CD4-positive, alpha-beta memory T cell (primary cell): ENCODE measurements at regions of chr5 and their contacts with region 1.

Region 1: GRCh38 chr5:172833686-172834414 is at the start of gene ERGIC1:
- DNase-seq: peak; percentile 59 to 73 (median 63)
- H3K4me3 ChIP-seq: peak within 1 kb of the TSS; percentile 63 to 69
- H3K4me3 Mint-ChIP-seq: peak within 1 kb of the TSS; percentile 90 to 96 (median 92)
- H3K27ac ChIP-seq: peak within 1 kb of the TSS; percentile 82
- H3K27ac Mint-ChIP-seq: peak within 1 kb of the TSS; percentile 89 to 97 (median 93)
- H3K4me1 ChIP-seq: peaks cover 47% of the 10 kb centered on the region
- H3K4me1 Mint-ChIP-seq: peaks cover 25 to 52% (median 36%) of the 10 kb centered on the region in 4 donors
- H3K27me3 ChIP-seq: no peaks in the 10 kb centered on the region
- H3K27me3 Mint-ChIP-seq: no peaks in the 10 kb centered on the region
- total RNA-seq, gene ERGIC1: 45.8 to 51.0 TPM

Region 2: DNA sequence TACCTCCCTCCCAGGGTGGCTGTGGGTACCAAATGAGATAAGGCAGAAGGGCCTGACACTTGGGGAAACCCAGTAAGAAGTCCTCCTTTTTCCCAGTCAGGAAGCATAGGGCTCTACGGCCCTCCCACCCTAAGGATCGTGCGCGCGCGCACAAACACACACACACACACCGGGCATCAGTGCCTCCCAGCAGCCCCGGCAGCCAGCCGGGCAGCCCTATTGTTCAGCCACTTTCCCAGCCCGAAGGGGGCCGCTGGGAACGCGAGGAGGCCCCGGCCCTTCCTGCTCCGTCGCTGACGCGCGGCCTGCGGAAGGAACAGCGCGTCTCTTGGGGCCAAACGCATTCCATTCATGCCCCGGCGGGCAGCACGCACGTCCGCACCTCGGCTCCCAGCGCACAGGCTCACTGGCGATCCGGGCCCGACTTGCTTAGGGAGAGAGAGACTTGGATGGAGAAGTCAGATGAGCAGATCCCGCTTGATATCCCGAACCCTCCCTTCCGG is 85.5 kb before region 1 on chr5:
- CTCF ChIA-PET with region 1: no interaction called
- POLR2A ChIA-PET with region 1: no interaction called
- intact Hi-C with region 1: no loop called
- DNase-seq: no peak
- H3K4me3 ChIP-seq: no peak overlapping the region
- H3K4me3 Mint-ChIP-seq: no peak overlapping the region
- H3K27ac ChIP-seq: no peak overlapping the region
- H3K27ac Mint-ChIP-seq: no peak overlapping the region
- H3K4me1 ChIP-seq: no peaks in the 10 kb centered on the region
- H3K4me1 Mint-ChIP-seq: peaks cover 0 to 10% (median 4%) of the 10 kb centered on the region in 4 donors
- H3K27me3 ChIP-seq: no peaks in the 10 kb centered on the region
- H3K27me3 Mint-ChIP-seq: peaks cover 0 to 1% of the 10 kb centered on the region in 2 donors

Region 3: DNA sequence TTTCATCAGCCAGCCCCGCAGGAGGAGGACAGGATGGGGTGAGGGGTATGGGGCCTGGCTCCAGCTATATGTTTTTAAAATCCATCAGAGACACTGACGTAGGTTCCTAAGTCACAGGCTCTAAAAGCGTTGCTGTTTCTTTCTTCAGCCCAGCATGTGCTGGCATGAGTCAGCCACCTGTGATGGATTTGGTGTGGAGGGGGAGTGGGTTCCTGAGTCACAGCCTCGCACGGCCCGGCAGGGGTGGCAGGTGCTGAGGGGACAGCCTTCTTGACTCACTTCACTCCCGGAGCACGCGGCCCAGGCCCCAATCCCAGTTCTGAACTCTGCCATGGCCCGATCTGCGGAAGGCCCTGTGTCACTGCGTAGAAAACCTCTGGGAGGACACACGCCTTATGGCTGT is 86.6 kb after region 1 on chr5:
- CTCF ChIA-PET with region 1: interaction called, 3 read pairs
- POLR2A ChIA-PET with region 1: no interaction called
- intact Hi-C with region 1: loop called (anchors 10 kb)
- DNase-seq: no peak
- H3K4me3 ChIP-seq: no peak overlapping the region
- H3K4me3 Mint-ChIP-seq: no peak overlapping the region
- H3K27ac ChIP-seq: no peak overlapping the region
- H3K27ac Mint-ChIP-seq: peak overlapping the region in 1 of 7 donors; percentile 30
- H3K4me1 ChIP-seq: no peaks in the 10 kb centered on the region
- H3K4me1 Mint-ChIP-seq: peaks cover 0 to 4% (median under 1%) of the 10 kb centered on the region in 4 donors
- H3K27me3 ChIP-seq: no peaks in the 10 kb centered on the region
- H3K27me3 Mint-ChIP-seq: no peaks in the 10 kb centered on the region